Transverse colon (tissue), 4 donors: ENCODE measurements at regions of chr4 and their contacts with region 1.

Region 1: GRCh38 chr4:81982846-81983540 is 390.8 kb downstream of the HNRNPD start:
- DNase-seq: no peak
- H3K4me3 ChIP-seq: no peak overlapping the region
- H3K27ac ChIP-seq: no peak overlapping the region
- H3K4me1 ChIP-seq: no peaks in the 10 kb centered on the region
- H3K27me3 ChIP-seq: no peaks in the 10 kb centered on the region
- CTCF ChIP-seq: no peak
- EP300 ChIP-seq: no peak
- POLR2A ChIP-seq: no peak

Region 2: GRCh38 chr4:82044142-82044993 is 61.4 kb after region 1 on chr4:
- in situ Hi-C with region 1: no loop called
- intact Hi-C with region 1: loop called (anchors 2 kb)
- DNase-seq: peak; percentile 38
- H3K4me3 ChIP-seq: peak overlapping the region in 3 of 4 donors; percentile 26 to 59 (median 36)
- H3K27ac ChIP-seq: no peak overlapping the region
- H3K4me1 ChIP-seq: peaks cover 0 to 14% (median 13%) of the 10 kb centered on the region in 4 donors
- H3K27me3 ChIP-seq: peaks cover 59% of the 10 kb centered on the region
- CTCF ChIP-seq: no peak
- EP300 ChIP-seq: no peak
- POLR2A ChIP-seq: no peak